Activated CD4-positive, alpha-beta T cell treated with anti-CD3 and anti-CD28 coated beads, Interleukin-2, amount 10 ng/mL, durations not matched to agents 24 days and 14 days (primary cell): ENCODE measurements at regions of chr14 and their contacts with region 1.

Region 1: GRCh38 chr14:22556990-22557623 is 31.9 kb downstream of the DAD1 start:
- DNase-seq: peak; percentile 97
- H3K4me3 Mint-ChIP-seq: peak overlapping the region; percentile 90
- H3K27ac Mint-ChIP-seq: peak overlapping the region; percentile 97
- H3K4me1 Mint-ChIP-seq: peaks cover 86% of the 10 kb centered on the region
- H3K27me3 Mint-ChIP-seq: peaks cover 4% of the 10 kb centered on the region

Region 2: DNA sequence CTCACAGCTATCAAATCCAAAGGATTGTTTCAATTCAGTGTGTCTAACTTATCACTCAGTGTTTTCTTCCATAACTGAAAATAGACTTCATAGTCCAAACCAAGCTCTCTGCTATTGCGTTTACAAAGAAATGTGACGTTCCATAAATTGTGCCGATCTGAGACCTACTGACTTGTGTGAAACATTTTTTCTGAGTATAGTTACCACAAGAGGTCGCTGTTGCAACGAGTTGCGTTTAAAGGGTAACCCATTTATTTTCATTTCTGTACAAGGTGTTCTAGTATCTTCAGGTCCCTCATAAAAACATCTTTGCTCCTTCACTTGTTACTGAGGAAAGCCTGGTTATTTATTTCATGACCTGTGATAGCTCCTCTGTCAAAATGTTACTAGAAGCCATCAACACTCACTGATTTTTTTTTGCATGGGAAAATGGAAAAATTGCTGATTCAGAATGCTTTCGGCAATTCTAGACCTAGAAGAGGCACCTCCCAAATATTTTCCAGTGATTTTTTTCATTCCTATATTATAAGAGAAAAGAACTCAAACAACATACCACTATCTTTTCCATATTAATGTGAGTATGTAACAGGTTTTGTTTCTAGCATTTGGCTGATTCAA is 822.5 kb before region 1 on chr14:
- intact Hi-C with region 1: loop called (anchors 10 kb)
- DNase-seq: peak; percentile 82
- H3K4me3 Mint-ChIP-seq: peak overlapping the region; percentile 23
- H3K27ac Mint-ChIP-seq: no peak overlapping the region
- H3K4me1 Mint-ChIP-seq: peaks cover 7% of the 10 kb centered on the region
- H3K27me3 Mint-ChIP-seq: peaks cover 31% of the 10 kb centered on the region

Region 3: GRCh38 chr14:21917699-21918436 is 639.2 kb before region 1 on chr14:
- intact Hi-C with region 1: loop called (anchors 1 kb)
- DNase-seq: peak; percentile 90
- H3K4me3 Mint-ChIP-seq: peak overlapping the region; percentile 76
- H3K27ac Mint-ChIP-seq: peak overlapping the region; percentile 74
- H3K4me1 Mint-ChIP-seq: peaks cover 47% of the 10 kb centered on the region
- H3K27me3 Mint-ChIP-seq: no peaks in the 10 kb centered on the region

Region 4: GRCh38 chr14:22226381-22226780 is 330.7 kb before region 1 on chr14:
- intact Hi-C with region 1: loop called (anchors 5 kb)
- DNase-seq: peak; percentile 72
- H3K4me3 Mint-ChIP-seq: peak overlapping the region; percentile 76
- H3K27ac Mint-ChIP-seq: peak overlapping the region; percentile 85
- H3K4me1 Mint-ChIP-seq: no peaks in the 10 kb centered on the region
- H3K27me3 Mint-ChIP-seq: no peaks in the 10 kb centered on the region

Region 5: GRCh38 chr14:22333422-22334276 is 223.5 kb before region 1 on chr14:
- intact Hi-C with region 1: no loop called
- DNase-seq: no peak
- H3K4me3 Mint-ChIP-seq: no peak overlapping the region
- H3K27ac Mint-ChIP-seq: no peak overlapping the region
- H3K4me1 Mint-ChIP-seq: no peaks in the 10 kb centered on the region
- H3K27me3 Mint-ChIP-seq: no peaks in the 10 kb centered on the region

Region 6: GRCh38 chr14:22427771-22428231 is 129.3 kb before region 1 on chr14:
- intact Hi-C with region 1: no loop called
- DNase-seq: no peak
- H3K4me3 Mint-ChIP-seq: no peak overlapping the region
- H3K27ac Mint-ChIP-seq: no peak overlapping the region
- H3K4me1 Mint-ChIP-seq: no peaks in the 10 kb centered on the region
- H3K27me3 Mint-ChIP-seq: no peaks in the 10 kb centered on the region

Region 7: DNA sequence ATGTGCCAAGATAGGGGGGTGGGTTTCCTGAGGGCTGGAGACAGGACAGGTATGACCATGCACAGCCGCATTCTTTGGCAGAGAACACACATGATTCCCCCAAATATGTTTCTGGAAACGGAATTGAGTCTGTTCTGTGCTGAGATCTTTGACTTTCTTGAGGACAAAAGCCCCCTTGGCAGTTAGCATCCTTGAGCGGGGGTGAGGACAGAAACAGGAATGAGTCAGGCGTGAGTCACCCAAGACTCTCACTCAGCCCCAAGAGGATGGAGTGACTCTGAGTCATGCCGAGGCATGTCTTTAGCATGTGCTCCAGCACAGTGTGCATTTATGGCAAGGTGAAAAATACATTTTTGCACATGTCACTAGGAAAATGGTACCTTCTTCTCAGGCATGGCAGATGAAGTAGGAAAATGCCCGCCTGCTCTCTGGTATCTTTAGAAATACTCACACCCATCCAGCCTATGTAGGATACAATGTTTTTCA is 20.2 kb before region 1 on chr14:
- intact Hi-C with region 1: loop called (anchors 1 kb)
- DNase-seq: peak; percentile 93
- H3K4me3 Mint-ChIP-seq: peak overlapping the region; percentile 84
- H3K27ac Mint-ChIP-seq: peak overlapping the region; percentile 93
- H3K4me1 Mint-ChIP-seq: peaks cover 89% of the 10 kb centered on the region
- H3K27me3 Mint-ChIP-seq: no peaks in the 10 kb centered on the region

Region 8: GRCh38 chr14:22653012-22653621 is 96.0 kb after region 1 on chr14:
- intact Hi-C with region 1: loop called (anchors 1 kb)
- DNase-seq: peak; percentile 85
- H3K4me3 Mint-ChIP-seq: no peak overlapping the region
- H3K27ac Mint-ChIP-seq: no peak overlapping the region
- H3K4me1 Mint-ChIP-seq: no peaks in the 10 kb centered on the region
- H3K27me3 Mint-ChIP-seq: no peaks in the 10 kb centered on the region

Region 9: DNA sequence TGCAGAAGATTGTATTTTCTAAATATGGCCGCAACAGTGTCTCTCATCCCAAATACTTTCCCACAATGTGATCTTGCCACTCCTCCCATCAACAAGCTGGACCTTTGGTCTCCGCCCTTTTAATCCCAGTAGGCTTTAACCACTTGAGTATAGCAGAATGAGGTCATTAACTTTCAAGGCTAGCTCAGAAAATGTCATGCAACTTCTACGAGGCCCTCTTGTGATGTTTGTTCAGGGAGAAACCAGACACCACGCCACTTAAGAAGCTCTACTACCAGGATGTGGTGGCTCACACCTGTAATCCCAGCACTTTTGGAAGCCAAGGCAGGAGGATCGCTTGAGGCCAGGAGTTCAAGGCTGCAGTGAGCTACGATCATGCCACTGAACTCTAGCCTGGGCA is 107.2 kb after region 1 on chr14:
- intact Hi-C with region 1: no loop called
- DNase-seq: no peak
- H3K4me3 Mint-ChIP-seq: no peak overlapping the region
- H3K27ac Mint-ChIP-seq: no peak overlapping the region
- H3K4me1 Mint-ChIP-seq: peaks cover 3% of the 10 kb centered on the region
- H3K27me3 Mint-ChIP-seq: peaks cover 3% of the 10 kb centered on the region

Region 10: GRCh38 chr14:22715186-22715812 is 158.2 kb after region 1 on chr14:
- intact Hi-C with region 1: no loop called
- DNase-seq: no peak
- H3K4me3 Mint-ChIP-seq: no peak overlapping the region
- H3K27ac Mint-ChIP-seq: no peak overlapping the region
- H3K4me1 Mint-ChIP-seq: peaks cover 14% of the 10 kb centered on the region
- H3K27me3 Mint-ChIP-seq: peaks cover 18% of the 10 kb centered on the region

Region 11: GRCh38 chr14:22986508-22987054 is 429.5 kb after region 1 on chr14:
- intact Hi-C with region 1: loop called (anchors 2 kb)
- DNase-seq: peak; percentile 96
- H3K4me3 Mint-ChIP-seq: no peak overlapping the region
- H3K27ac Mint-ChIP-seq: no peak overlapping the region
- H3K4me1 Mint-ChIP-seq: no peaks in the 10 kb centered on the region
- H3K27me3 Mint-ChIP-seq: no peaks in the 10 kb centered on the region